Testis (tissue), 5 donors: ENCODE measurements at regions of chr10 and their contacts with region 1.

Region 1: DNA sequence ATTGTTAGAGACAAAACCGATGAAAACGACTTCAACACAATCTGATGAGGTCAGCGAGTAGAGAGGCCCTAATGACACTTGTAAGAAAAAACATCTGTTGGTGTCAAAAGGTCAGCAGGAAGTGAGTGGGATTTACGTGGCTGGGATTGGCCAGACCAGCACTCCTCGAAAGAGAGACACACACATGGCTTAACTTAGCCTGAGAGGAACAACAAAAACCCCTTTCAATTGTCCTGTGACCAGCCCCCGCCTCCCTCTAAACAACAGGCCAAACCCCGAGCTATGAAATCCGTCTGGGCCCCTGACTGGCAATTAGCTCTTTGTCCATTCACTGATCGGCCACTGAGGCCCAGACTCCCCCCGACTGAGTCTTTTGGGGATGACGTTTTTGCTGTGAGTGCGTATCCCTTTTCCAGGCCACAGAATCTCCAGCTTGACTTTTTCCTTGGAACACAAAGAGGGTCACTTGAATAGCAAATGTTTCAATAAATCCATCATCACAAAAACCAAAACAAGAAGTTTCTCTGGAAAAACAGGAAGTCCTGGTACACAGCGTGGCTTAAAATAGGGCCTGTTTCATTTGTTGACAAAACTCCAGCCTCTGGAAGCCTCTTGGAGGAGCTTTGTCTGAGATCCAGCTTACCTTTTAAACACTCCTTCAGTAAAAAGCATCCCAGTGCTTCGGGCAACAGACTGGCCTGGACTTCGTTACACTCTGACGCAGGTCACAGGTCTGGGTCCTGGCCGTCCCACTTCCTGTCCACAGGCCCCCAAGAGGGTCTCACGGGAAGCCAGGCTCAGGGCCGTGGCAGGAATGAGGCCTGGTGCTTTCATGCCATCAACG is 103.0 kb downstream of the CTBP2 start:
- DNase-seq: peak; percentile 70
- H3K4me3 ChIP-seq: no peak overlapping the region
- H3K27ac ChIP-seq: peak overlapping the region; percentile 91 to 92
- H3K4me1 ChIP-seq: peaks cover 71% of the 10 kb centered on the region
- H3K27me3 ChIP-seq: no peaks in the 10 kb centered on the region
- CTCF ChIP-seq: no peak
- POLR2A ChIP-seq: no peak

Region 2: GRCh38 chr10:124898471-124898870 is 158.9 kb before region 1 on chr10:
- intact Hi-C with region 1: no loop called
- DNase-seq: no peak
- H3K4me3 ChIP-seq: no peak overlapping the region
- H3K27ac ChIP-seq: no peak overlapping the region
- H3K4me1 ChIP-seq: no peaks in the 10 kb centered on the region
- H3K27me3 ChIP-seq: no peaks in the 10 kb centered on the region
- CTCF ChIP-seq: no peak
- POLR2A ChIP-seq: no peak

Region 3: GRCh38 chr10:124916585-124917427 is 140.6 kb before region 1 on chr10:
- intact Hi-C with region 1: loop called (anchors 10 kb)
- DNase-seq: peak; percentile 99
- H3K4me3 ChIP-seq: peak overlapping the region; percentile 83 to 94
- H3K27ac ChIP-seq: peak overlapping the region; percentile 98 to 100
- H3K4me1 ChIP-seq: peaks cover 20% of the 10 kb centered on the region
- H3K27me3 ChIP-seq: no peaks in the 10 kb centered on the region
- CTCF ChIP-seq: no peak
- POLR2A ChIP-seq: peak; percentile 50

Region 4: GRCh38 chr10:124943301-124944092 is 113.9 kb before region 1 on chr10:
- intact Hi-C with region 1: no loop called
- DNase-seq: no peak
- H3K4me3 ChIP-seq: no peak overlapping the region
- H3K27ac ChIP-seq: peak overlapping the region; percentile 40 to 74
- H3K4me1 ChIP-seq: peaks cover 28% of the 10 kb centered on the region
- H3K27me3 ChIP-seq: no peaks in the 10 kb centered on the region
- CTCF ChIP-seq: no peak
- POLR2A ChIP-seq: no peak

Region 5: DNA sequence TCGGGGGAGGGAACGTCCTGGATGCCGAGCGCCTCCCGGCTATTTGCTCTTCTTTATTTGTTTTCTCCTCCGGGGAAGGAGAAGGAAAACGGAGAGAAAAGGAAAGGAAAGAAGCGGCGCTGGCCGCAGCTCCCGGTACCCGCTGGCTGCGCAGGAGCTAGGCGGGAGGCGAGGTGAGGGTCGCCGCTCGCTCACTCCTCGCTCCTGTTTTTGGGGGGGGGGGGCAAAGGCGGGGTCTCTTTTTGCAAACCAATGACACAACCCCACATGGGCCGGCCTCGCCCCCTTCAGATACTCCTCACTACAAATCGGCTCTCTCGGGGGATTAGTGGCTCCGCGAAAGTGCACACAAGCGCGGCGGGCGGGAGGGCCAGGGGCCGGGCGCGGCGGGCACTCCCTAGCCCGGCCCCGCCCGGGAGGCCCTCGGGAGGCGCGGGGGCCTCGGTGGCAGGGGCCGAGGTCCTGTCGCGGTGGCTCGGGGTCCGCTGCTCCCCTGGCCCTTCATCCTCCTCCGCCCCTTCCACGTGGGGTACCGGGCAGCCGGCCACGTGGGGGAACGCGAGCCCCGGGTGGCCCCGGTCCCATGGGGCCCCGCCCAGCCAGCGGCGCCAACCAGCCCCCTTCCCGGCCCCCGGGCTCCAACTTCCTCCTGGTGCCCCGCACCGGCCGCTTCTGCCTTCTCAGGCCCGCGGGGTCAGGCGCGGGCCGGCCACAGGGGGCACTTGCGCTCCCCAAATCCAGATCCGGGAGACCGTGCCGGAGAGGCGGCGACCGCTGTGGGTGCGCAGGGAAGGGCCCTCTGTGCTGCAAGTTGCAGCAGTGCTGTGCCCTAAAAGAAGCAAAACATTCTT is 103.7 kb after region 1 on chr10:
- intact Hi-C with region 1: loop called (anchors 5 kb)
- DNase-seq: peak; percentile 91
- H3K4me3 ChIP-seq: peak overlapping the region; percentile 79 to 89
- H3K27ac ChIP-seq: peak overlapping the region; percentile 88 to 99
- H3K4me1 ChIP-seq: peaks cover 15% of the 10 kb centered on the region
- H3K27me3 ChIP-seq: no peaks in the 10 kb centered on the region
- CTCF ChIP-seq: peak; percentile 25 to 47 (median 29)
- POLR2A ChIP-seq: no peak

Region 6: GRCh38 chr10:125355657-125356056 is 298.3 kb after region 1 on chr10:
- intact Hi-C with region 1: no loop called
- DNase-seq: no peak
- H3K4me3 ChIP-seq: no peak overlapping the region
- H3K27ac ChIP-seq: no peak overlapping the region
- H3K4me1 ChIP-seq: no peaks in the 10 kb centered on the region
- H3K27me3 ChIP-seq: no peaks in the 10 kb centered on the region
- CTCF ChIP-seq: no peak
- POLR2A ChIP-seq: no peak